K562 (cell line): ENCODE measurements at regions of chr1 and their contacts with region 1.

Region 1: GRCh38 chr1:86380257-86380861 is 15.8 kb downstream of the ODF2L start:
- DNase-seq: peak; percentile 40 to 68 (median 45)
- ATAC-seq: peak; percentile 72
- H3K4me3 ChIP-seq: no peak overlapping the region
- H3K27ac ChIP-seq: no peak overlapping the region
- H3K4me1 ChIP-seq: no peaks in the 10 kb centered on the region
- H3K27me3 ChIP-seq: no peaks in the 10 kb centered on the region
- CTCF ChIP-seq: peak; percentile 53 to 77 (median 58); a peak in 4 of 6 replicates
- EP300 ChIP-seq: no peak
- POLR2A ChIP-seq: no peak
- RAD21 ChIP-seq: peak; percentile 87 to 88

Region 2: GRCh38 chr1:86460998-86461397 is 80.6 kb after region 1 on chr1:
- CTCF ChIA-PET with region 1: no interaction called
- POLR2A ChIA-PET with region 1: no interaction called
- in situ Hi-C with region 1: no loop called
- intact Hi-C with region 1: no loop called
- DNase-seq: peak; percentile 38 to 76 (median 56)
- ATAC-seq: peak; percentile 80
- H3K4me3 ChIP-seq: no peak overlapping the region
- H3K27ac ChIP-seq: peak overlapping the region; percentile 61
- H3K4me1 ChIP-seq: peaks cover 11 to 23% of the 10 kb centered on the region in 2 experiments; a peak in 4 of 5 replicates
- H3K27me3 ChIP-seq: no peaks in the 10 kb centered on the region
- CTCF ChIP-seq: no peak
- EP300 ChIP-seq: no peak; the same call in 1 of the 2 replicates
- POLR2A ChIP-seq: no peak
- RAD21 ChIP-seq: no peak

Region 3: GRCh38 chr1:86507935-86508582 is 127.7 kb after region 1 on chr1:
- CTCF ChIA-PET with region 1: interaction called, 29 read pairs
- POLR2A ChIA-PET with region 1: no interaction called
- in situ Hi-C with region 1: no loop called
- intact Hi-C with region 1: loop called (anchors 2 kb)
- DNase-seq: peak in 2 of 4 experiments; percentile 15 to 33
- ATAC-seq: peak; percentile 72
- H3K4me3 ChIP-seq: no peak overlapping the region
- H3K27ac ChIP-seq: no peak overlapping the region
- H3K4me1 ChIP-seq: no peaks in the 10 kb centered on the region; a peak in 1 of 5 replicates
- H3K27me3 ChIP-seq: peaks cover 13 to 19% of the 10 kb centered on the region in 2 experiments; a peak in 3 of 5 replicates
- CTCF ChIP-seq: peak; percentile 45 to 63 (median 52)
- EP300 ChIP-seq: no peak
- POLR2A ChIP-seq: no peak
- RAD21 ChIP-seq: peak; percentile 58 to 74

Region 4: DNA sequence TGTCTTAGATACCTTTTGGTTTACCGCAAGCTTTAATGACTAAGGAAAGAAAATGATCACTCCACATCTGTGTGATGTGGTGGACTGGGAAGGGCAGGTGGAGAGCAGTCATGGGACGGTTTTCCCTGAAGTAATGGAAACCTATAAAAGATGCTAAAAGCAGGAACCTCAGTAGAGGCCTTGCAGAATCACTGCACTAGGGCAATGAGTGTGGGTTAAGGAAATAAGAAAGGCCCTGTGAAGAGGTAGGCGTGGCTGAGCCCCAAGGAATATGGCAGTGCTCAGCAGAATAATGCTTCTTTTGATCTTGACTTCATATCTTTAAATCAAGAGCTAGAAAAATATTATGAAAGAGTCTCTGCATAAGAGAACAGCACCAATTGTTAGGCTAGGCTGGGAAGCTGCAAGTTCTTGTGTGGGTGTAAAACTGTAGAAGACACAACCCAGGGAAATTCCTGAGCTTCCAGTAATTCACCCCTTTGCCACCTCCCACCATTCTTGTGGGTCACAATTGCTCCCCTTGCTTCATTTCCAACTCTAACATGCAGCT is 216.5 kb after region 1 on chr1:
- CTCF ChIA-PET with region 1: no interaction called
- POLR2A ChIA-PET with region 1: no interaction called
- in situ Hi-C with region 1: no loop called
- intact Hi-C with region 1: no loop called
- DNase-seq: no peak
- ATAC-seq: no peak
- H3K4me3 ChIP-seq: no peak overlapping the region
- H3K27ac ChIP-seq: no peak overlapping the region
- H3K4me1 ChIP-seq: no peaks in the 10 kb centered on the region
- H3K27me3 ChIP-seq: no peaks in the 10 kb centered on the region
- CTCF ChIP-seq: no peak
- EP300 ChIP-seq: no peak
- POLR2A ChIP-seq: no peak
- RAD21 ChIP-seq: no peak

Region 5: DNA sequence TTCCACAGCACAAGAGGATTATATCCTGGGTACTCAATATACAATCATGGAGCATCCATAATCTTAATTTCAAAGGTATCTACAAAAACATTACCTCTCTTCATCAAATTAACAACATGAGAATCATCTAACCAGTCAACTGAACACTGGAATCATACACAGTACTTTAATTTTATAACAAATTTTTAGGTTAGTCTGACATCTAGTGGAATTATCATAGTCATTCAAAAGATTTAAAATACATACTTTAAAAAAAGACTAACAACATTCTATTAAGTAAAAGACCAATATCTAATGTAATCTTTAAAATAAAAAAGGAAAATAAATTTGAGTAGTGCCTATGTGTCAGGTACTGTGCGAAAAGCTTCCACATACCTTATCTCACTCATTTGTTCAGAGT is 307.2 kb after region 1 on chr1:
- CTCF ChIA-PET with region 1: interaction called, 3 read pairs
- POLR2A ChIA-PET with region 1: no interaction called
- in situ Hi-C with region 1: no loop called
- intact Hi-C with region 1: loop called (anchors 10 kb)
- DNase-seq: no peak
- ATAC-seq: no peak
- H3K4me3 ChIP-seq: no peak overlapping the region
- H3K27ac ChIP-seq: no peak overlapping the region
- H3K4me1 ChIP-seq: no peaks in the 10 kb centered on the region
- H3K27me3 ChIP-seq: peaks cover 0 to 2% of the 10 kb centered on the region in 2 experiments; a peak in 2 of 5 replicates
- CTCF ChIP-seq: peak in 1 of 3 experiments; percentile 28; a peak in 2 of 6 replicates
- EP300 ChIP-seq: no peak
- POLR2A ChIP-seq: no peak
- RAD21 ChIP-seq: peak; percentile 19 to 44; a peak in 2 of 4 replicates

Region 6: GRCh38 chr1:86774305-86775295 is 394.2 kb after region 1 on chr1:
- CTCF ChIA-PET with region 1: no interaction called
- POLR2A ChIA-PET with region 1: no interaction called
- in situ Hi-C with region 1: no loop called
- intact Hi-C with region 1: no loop called
- DNase-seq: peak; percentile 31 to 87 (median 54)
- ATAC-seq: peak; percentile 83
- H3K4me3 ChIP-seq: no peak overlapping the region
- H3K27ac ChIP-seq: peak overlapping the region; percentile 43; the same call in 2 of the 3 replicates
- H3K4me1 ChIP-seq: peaks cover 13 to 41% of the 10 kb centered on the region in 2 experiments
- H3K27me3 ChIP-seq: no peaks in the 10 kb centered on the region
- CTCF ChIP-seq: no peak
- EP300 ChIP-seq: peak; percentile 46; the same call in 1 of the 2 replicates
- POLR2A ChIP-seq: no peak
- RAD21 ChIP-seq: no peak